H1 (cell line): ENCODE measurements at regions of chr16 and their contacts with region 1.

Region 1: DNA sequence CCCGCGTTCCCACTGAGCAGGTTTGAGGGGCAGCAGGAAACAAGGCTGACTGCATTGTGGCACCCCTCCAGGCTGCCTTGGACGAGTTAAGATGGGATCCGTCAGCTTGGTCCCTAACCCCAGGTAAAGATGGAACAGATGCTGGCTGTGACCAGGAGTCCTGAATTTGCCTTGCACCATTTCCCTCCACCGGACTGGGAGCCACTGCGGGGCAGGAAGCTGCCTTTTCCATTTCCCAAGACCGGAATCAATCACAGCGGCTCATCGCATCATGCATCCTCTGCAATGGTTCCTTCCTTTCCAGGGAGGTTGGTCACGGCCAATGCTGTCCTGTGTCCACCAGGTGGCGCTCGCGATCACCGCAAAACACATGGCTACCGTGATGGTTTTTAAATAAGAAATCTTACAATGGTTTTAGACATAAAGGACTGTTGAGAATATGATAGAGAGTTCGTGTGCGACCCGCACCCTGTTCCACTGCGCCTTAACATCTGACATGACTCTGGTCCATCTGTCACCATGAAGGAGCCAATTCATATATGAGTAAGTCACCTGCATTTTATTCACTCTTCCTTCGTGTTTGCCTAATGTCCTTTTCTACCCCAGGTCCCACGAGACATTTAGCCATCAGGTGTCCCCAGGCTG is 6.8 kb upstream of the MEAK7 start:
- DNase-seq: peak; percentile 64 to 89
- H3K4me3 ChIP-seq: peak overlapping the region in 2 of 4 experiments; percentile 26 to 36; a peak in 2 of 8 replicates
- H3K27ac ChIP-seq: no peak overlapping the region
- H3K4me1 ChIP-seq: peaks cover 3 to 16% (median 11%) of the 10 kb centered on the region in 4 experiments; a peak in 6 of 7 replicates
- H3K27me3 ChIP-seq: no peaks in the 10 kb centered on the region; a peak in 1 of 7 replicates
- CTCF ChIP-seq: peak; percentile 71 to 93 (median 87)
- EP300 ChIP-seq: no peak
- POLR2A ChIP-seq: no peak
- RAD21 ChIP-seq: peak; percentile 85 to 87

Region 2: GRCh38 chr16:84357191-84357651 is 154.1 kb before region 1 on chr16:
- CTCF ChIA-PET with region 1: no interaction called
- POLR2A ChIA-PET with region 1: no interaction called
- DNase-seq: no peak
- H3K4me3 ChIP-seq: no peak overlapping the region
- H3K27ac ChIP-seq: no peak overlapping the region
- H3K4me1 ChIP-seq: peaks cover 0 to 2% (median 0%) of the 10 kb centered on the region in 4 experiments; a peak in 3 of 7 replicates
- H3K27me3 ChIP-seq: no peaks in the 10 kb centered on the region
- CTCF ChIP-seq: no peak
- EP300 ChIP-seq: no peak
- POLR2A ChIP-seq: no peak
- RAD21 ChIP-seq: no peak

Region 3: GRCh38 chr16:84527504-84528269 is 16.4 kb after region 1 on chr16:
- CTCF ChIA-PET with region 1: interaction called, 34 read pairs
- POLR2A ChIA-PET with region 1: interaction called, 3 read pairs
- DNase-seq: no peak
- H3K4me3 ChIP-seq: no peak overlapping the region
- H3K27ac ChIP-seq: no peak overlapping the region
- H3K4me1 ChIP-seq: peaks cover 5 to 17% (median 11%) of the 10 kb centered on the region in 4 experiments
- H3K27me3 ChIP-seq: no peaks in the 10 kb centered on the region; a peak in 1 of 7 replicates
- CTCF ChIP-seq: no peak
- EP300 ChIP-seq: no peak
- POLR2A ChIP-seq: no peak
- RAD21 ChIP-seq: no peak

Region 4: GRCh38 chr16:84562174-84562815 is 51.0 kb after region 1 on chr16:
- CTCF ChIA-PET with region 1: interaction called, 64 read pairs
- POLR2A ChIA-PET with region 1: interaction called, 4 read pairs
- DNase-seq: no peak
- H3K4me3 ChIP-seq: no peak overlapping the region; a peak in 1 of 8 replicates
- H3K27ac ChIP-seq: no peak overlapping the region
- H3K4me1 ChIP-seq: peaks cover 13 to 39% (median 28%) of the 10 kb centered on the region in 4 experiments
- H3K27me3 ChIP-seq: no peaks in the 10 kb centered on the region
- CTCF ChIP-seq: no peak
- EP300 ChIP-seq: no peak
- POLR2A ChIP-seq: no peak
- RAD21 ChIP-seq: no peak

Region 5: DNA sequence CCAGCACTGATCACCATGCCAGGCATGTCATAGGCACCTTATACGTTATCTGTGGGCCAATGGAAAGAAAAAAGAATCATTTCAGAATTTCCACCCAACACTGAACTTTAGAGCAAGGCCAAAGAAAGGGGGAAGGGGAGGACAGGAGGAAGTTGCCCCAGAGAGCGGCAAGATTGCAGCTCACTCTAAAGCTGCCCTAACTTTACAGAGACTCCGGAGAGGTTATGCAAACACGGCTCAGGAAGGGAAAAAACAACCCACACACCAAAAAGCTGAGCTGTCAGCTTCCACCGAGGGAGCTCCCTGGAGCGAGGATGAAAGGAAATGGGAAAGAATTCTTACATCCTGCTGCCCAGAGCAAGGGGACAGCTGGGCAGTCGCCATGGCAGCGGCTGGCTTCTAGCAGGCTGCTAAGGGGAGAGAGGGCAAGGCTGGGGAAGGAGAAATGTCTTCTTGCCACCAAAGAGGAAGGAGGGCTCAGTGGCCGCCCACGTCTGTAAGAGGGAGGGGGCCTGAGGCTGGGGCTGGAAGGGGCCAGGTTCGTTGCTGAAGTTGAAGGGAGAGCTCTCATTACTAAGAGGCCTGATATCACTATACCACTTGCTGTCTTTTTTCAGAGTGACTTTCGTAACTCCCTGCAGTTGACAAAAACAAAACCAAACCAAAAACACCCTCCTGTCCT is 88.4 kb after region 1 on chr16:
- CTCF ChIA-PET with region 1: interaction called, 10 read pairs
- POLR2A ChIA-PET with region 1: interaction called, 5 read pairs
- DNase-seq: peak; percentile 50 to 79
- H3K4me3 ChIP-seq: peak overlapping the region in 2 of 4 experiments; percentile 14 to 36; a peak in 5 of 8 replicates
- H3K27ac ChIP-seq: no peak overlapping the region
- H3K4me1 ChIP-seq: peaks cover 4 to 37% (median 26%) of the 10 kb centered on the region in 4 experiments
- H3K27me3 ChIP-seq: peaks cover 0 to 4% (median 1%) of the 10 kb centered on the region in 4 experiments; a peak in 3 of 7 replicates
- CTCF ChIP-seq: no peak
- EP300 ChIP-seq: no peak
- POLR2A ChIP-seq: no peak
- RAD21 ChIP-seq: no peak